Body of pancreas (tissue), 4 donors: ENCODE measurements at regions of chr5 and their contacts with region 1.

Region 1: GRCh38 chr5:2047341-2047927 is 164.7 kb upstream of the IRX4 start:
- DNase-seq: no peak
- ATAC-seq: no peak
- H3K4me3 ChIP-seq: no peak overlapping the region
- H3K27ac ChIP-seq: no peak overlapping the region
- H3K4me1 ChIP-seq: no peaks in the 10 kb centered on the region
- H3K27me3 ChIP-seq: peaks cover 0 to under 1% of the 10 kb centered on the region in 2 donors
- CTCF ChIP-seq: no peak
- POLR2A ChIP-seq: no peak

Region 2: GRCh38 chr5:1666812-1667588 is 380.4 kb before region 1 on chr5:
- intact Hi-C with region 1: loop called (anchors 10 kb)
- DNase-seq: peak; percentile 32 to 72 (median 64)
- ATAC-seq: peak; percentile 46
- H3K4me3 ChIP-seq: no peak overlapping the region
- H3K27ac ChIP-seq: no peak overlapping the region
- H3K4me1 ChIP-seq: peaks cover 20% of the 10 kb centered on the region
- H3K27me3 ChIP-seq: peaks cover 0 to 10% of the 10 kb centered on the region in 2 donors
- CTCF ChIP-seq: peak in 6 of 7 experiments; percentile 20 to 75 (median 42)
- POLR2A ChIP-seq: no peak

Region 3: DNA sequence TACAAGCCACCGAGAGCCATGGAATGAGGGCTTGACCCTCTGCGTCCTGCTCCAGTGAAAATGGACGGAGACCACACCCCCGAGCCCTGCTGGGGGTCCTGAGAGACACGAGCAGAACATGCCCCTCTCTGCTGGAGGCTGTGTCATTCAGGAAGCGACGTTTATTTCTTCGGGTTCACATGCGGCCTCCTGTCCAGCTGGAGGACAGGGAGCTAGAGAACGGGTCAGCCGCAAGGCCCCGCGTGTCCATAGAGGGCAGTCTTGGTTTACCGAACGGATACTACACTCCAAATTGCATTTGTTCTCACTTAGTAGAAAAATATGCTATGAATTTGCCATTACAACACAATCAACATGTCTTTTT is 283.9 kb before region 1 on chr5:
- intact Hi-C with region 1: loop called (anchors 10 kb)
- DNase-seq: peak; percentile 36 to 71 (median 55)
- ATAC-seq: peak; percentile 67
- H3K4me3 ChIP-seq: no peak overlapping the region
- H3K27ac ChIP-seq: no peak overlapping the region
- H3K4me1 ChIP-seq: peaks cover 4% of the 10 kb centered on the region
- H3K27me3 ChIP-seq: no peaks in the 10 kb centered on the region
- CTCF ChIP-seq: peak; percentile 47 to 77 (median 59)
- POLR2A ChIP-seq: no peak

Region 4: GRCh38 chr5:2496126-2496525 is 448.7 kb after region 1 on chr5:
- intact Hi-C with region 1: no loop called
- DNase-seq: no peak
- ATAC-seq: no peak
- H3K4me3 ChIP-seq: no peak overlapping the region
- H3K27ac ChIP-seq: no peak overlapping the region
- H3K4me1 ChIP-seq: no peaks in the 10 kb centered on the region
- H3K27me3 ChIP-seq: no peaks in the 10 kb centered on the region
- CTCF ChIP-seq: no peak
- POLR2A ChIP-seq: no peak